ENCODE measurements at regions of chr18 and their contacts with region 1.

Region 1: GRCh38 chr18:22563098-22563707 is 145.5 kb upstream of the CTAGE1 start:
- DNase-seq: peak; percentile 35
- H3K4me3 ChIP-seq: no peak overlapping the region
- H3K27ac ChIP-seq: no peak overlapping the region
- H3K4me1 ChIP-seq: peaks cover 0 to 17% (median 14%) of the 10 kb centered on the region in 4 donors
- H3K27me3 ChIP-seq: peaks cover 10% of the 10 kb centered on the region
- CTCF ChIP-seq: peak; percentile 65 to 89 (median 72)
- EP300 ChIP-seq: no peak
- POLR2A ChIP-seq: no peak

Region 2: DNA sequence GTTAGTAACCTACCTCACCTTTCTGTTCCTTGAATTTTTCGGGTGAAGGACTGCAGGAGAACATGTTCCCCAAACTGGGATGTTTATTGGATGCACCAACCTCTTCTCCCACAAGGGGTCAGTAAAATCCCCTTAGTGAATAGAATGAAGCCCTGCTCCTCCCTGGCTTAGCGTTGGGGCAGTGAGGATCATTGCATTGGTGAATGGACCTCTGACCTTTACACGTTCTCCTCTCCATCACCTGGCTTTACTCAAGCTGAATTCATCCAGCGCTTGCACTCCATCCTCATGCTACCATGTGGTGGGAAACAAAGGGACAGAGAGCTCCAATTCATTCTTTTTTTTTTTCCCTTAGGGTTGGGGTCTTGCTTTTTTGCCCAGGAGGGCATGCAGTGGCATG is 665.4 kb before region 1 on chr18:
- in situ Hi-C with region 1: loop called in 2 of 4 experiments (anchors 10 to 25 kb)
- intact Hi-C with region 1: no loop called
- DNase-seq: peak; percentile 42
- H3K4me3 ChIP-seq: no peak overlapping the region
- H3K27ac ChIP-seq: no peak overlapping the region
- H3K4me1 ChIP-seq: peaks cover 0 to 16% (median 5%) of the 10 kb centered on the region in 4 donors
- H3K27me3 ChIP-seq: no peaks in the 10 kb centered on the region
- CTCF ChIP-seq: peak; percentile 56 to 73 (median 63)
- EP300 ChIP-seq: no peak
- POLR2A ChIP-seq: no peak

Region 3: GRCh38 chr18:22169007-22169864 is 394.0 kb before region 1 on chr18 and contains the start of gene GATA6:
- in situ Hi-C with region 1: loop called in 3 of 4 experiments (anchors 25 kb)
- intact Hi-C with region 1: no loop called
- DNase-seq: peak; percentile 91
- H3K4me3 ChIP-seq: peak within 1 kb of the TSS; percentile 37 to 86 (median 80)
- H3K27ac ChIP-seq: peak within 1 kb of the TSS; percentile 91 to 96 (median 94)
- H3K4me1 ChIP-seq: peaks cover 0 to 32% (median 16%) of the 10 kb centered on the region in 4 donors
- H3K27me3 ChIP-seq: peaks cover 98% of the 10 kb centered on the region
- CTCF ChIP-seq: peak in 3 of 5 experiments; percentile 11 to 46 (median 39)
- EP300 ChIP-seq: no peak
- POLR2A ChIP-seq: peak; percentile 98
- total RNA-seq, gene GATA6: 49.7 to 223 (median 65.7) TPM

Region 4: DNA sequence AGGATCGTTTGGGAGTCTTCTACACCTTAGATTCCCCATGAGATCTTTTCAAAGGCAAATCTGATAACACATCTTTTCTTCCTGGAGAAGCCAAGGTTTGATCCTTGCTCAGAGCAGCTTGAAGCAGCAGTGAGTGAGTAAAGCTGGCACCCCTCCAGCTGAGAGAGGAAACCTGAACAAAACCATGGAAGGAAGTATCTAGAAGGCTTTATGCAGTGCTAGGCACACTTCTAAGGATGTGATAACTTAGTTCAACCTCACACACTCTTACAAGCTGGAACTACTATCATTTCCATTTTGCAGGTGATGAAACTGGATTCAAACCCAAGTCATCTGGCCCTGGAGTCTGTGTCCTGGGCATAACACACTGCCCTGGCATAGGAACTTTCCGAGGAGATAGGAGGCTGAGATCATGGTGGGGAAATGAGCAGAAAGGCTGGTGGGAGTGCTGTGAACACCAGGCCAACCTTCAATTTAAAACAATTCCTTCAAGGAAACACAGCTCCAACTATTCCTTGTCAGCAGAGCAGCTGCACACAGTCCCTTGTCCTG is 216.7 kb before region 1 on chr18:
- in situ Hi-C with region 1: loop called in 2 of 4 experiments (anchors 10 to 25 kb)
- intact Hi-C with region 1: no loop called
- DNase-seq: peak; percentile 81
- H3K4me3 ChIP-seq: no peak overlapping the region
- H3K27ac ChIP-seq: peak overlapping the region; percentile 81 to 89 (median 86)
- H3K4me1 ChIP-seq: peaks cover 13 to 54% (median 30%) of the 10 kb centered on the region in 4 donors
- H3K27me3 ChIP-seq: peaks cover 23% of the 10 kb centered on the region
- CTCF ChIP-seq: no peak
- EP300 ChIP-seq: no peak
- POLR2A ChIP-seq: no peak

Region 5: DNA sequence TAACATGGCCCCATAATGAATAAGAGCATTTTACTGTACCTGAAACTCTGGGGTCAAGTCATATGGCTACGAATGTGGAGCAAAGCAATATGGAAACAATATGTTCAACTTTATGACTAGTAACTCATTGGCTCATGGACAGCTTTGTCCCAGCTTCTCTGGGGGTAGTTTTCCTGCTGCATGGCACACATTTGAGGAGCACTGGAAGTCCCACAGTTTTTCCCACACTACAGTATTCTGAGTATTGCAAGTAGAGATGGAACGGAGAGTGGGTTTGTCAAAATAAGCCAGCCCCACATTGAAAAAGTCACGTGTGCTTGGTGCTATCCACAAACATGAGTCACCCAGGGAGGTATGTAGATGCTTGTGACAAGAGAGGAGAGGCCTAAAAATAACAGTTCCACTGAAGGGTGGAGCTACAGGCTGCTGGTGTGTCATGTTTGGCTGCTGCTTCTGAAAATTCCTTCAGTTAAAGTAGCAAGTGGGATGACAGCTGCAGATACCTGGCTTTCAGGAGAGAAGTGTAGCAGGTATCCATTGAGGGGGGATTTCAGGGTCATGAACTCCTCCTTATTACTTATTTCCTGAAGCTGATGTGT is 97.2 kb before region 1 on chr18:
- in situ Hi-C with region 1: loop called in 1 of 4 experiments (anchors 25 kb)
- intact Hi-C with region 1: no loop called
- DNase-seq: no peak
- H3K4me3 ChIP-seq: no peak overlapping the region
- H3K27ac ChIP-seq: peak overlapping the region; percentile 21 to 44 (median 33)
- H3K4me1 ChIP-seq: peaks cover 2 to 33% (median 16%) of the 10 kb centered on the region in 4 donors
- H3K27me3 ChIP-seq: no peaks in the 10 kb centered on the region
- CTCF ChIP-seq: no peak
- EP300 ChIP-seq: no peak
- POLR2A ChIP-seq: no peak

Measured in transverse colon (tissue), 4 donors.